PC-3 (cell line): ENCODE measurements at regions of chr1 and their contacts with region 1.

Region 1: GRCh38 chr1:204565617-204566582 is 49.7 kb downstream of the MDM4 start:
- DNase-seq: peak; percentile 96
- ATAC-seq: peak; percentile 78
- H3K4me3 ChIP-seq: peak overlapping the region; percentile 6; the same call in 1 of the 2 replicates
- H3K27ac ChIP-seq: peak overlapping the region; percentile 54
- H3K4me1 ChIP-seq: peaks cover 35% of the 10 kb centered on the region
- H3K27me3 ChIP-seq: no peaks in the 10 kb centered on the region
- CTCF ChIP-seq: peak; percentile 99

Region 2: DNA sequence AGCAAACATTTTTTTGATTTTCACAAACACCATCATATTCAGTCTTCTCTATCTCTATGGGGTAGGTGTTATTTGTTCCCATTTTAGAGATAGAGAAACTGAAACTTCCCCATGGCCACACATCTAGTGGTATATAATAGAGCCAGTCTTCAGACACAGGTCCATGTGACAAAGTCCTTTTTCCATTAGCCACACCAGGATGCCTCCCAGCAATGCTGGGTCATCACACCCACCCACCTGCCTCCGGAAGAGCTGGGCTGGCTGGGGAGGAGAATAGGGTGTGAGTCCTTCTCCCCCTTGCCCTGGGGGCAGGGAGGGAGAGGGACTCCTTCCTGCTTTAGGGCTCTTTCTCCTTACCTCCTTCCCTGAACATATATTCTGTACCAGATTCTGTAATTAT is 463.2 kb before region 1 on chr1:
- CTCF ChIA-PET with region 1: no interaction called
- POLR2A ChIA-PET with region 1: no interaction called
- intact Hi-C with region 1: no loop called
- DNase-seq: peak; percentile 98
- ATAC-seq: peak; percentile 52
- H3K4me3 ChIP-seq: peak overlapping the region; percentile 38; the same call in 1 of the 2 replicates
- H3K27ac ChIP-seq: peak overlapping the region; percentile 97
- H3K4me1 ChIP-seq: peaks cover 58% of the 10 kb centered on the region
- H3K27me3 ChIP-seq: no peaks in the 10 kb centered on the region
- CTCF ChIP-seq: no peak

Region 3: DNA sequence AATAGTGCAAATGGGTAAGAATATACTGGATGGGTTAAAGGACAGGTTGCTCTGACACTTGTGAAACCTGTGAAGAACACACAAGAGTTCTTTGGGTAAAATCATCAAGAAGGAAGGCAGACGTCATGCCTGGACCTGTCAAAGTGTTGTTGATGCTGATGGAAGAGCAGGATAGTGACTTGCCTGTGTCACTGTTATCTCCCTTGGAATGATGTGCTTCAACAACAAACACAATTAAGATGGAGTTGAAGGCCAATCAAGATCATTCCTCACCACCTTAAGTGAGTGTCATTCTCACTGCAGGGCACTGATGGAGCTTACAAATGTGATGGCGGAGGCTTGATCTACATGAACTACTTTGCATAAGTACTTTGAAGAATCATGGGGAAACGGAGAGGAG is 46.4 kb after region 1 on chr1:
- CTCF ChIA-PET with region 1: no interaction called
- POLR2A ChIA-PET with region 1: no interaction called
- intact Hi-C with region 1: no loop called
- DNase-seq: no peak
- ATAC-seq: no peak
- H3K4me3 ChIP-seq: no peak overlapping the region
- H3K27ac ChIP-seq: no peak overlapping the region
- H3K4me1 ChIP-seq: no peaks in the 10 kb centered on the region
- H3K27me3 ChIP-seq: no peaks in the 10 kb centered on the region
- CTCF ChIP-seq: no peak

Region 4: DNA sequence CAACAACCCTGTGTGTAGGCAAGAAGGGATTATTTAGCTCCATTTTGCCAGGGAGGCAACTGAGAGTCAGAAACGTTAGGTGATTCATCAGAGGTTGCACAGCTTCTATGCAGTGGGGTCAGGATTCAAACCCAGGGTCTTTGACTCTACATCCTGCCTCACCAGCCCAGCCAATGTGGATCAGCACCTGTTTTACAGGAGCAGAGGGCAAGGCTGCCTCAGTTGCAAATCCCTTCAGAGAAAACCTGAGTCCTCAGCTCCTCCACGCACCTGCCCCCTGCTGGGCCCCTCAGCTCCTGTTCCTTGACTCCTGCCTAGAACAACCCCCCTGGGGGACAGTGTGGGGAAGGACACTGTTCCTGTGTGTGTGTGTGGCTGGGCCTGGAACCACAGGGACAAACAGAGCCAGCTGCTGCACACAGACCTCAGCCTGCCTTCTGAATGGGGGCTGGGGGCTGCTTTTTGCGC is 58.0 kb after region 1 on chr1:
- CTCF ChIA-PET with region 1: interaction called, 10 read pairs
- POLR2A ChIA-PET with region 1: no interaction called
- intact Hi-C with region 1: loop called (anchors 2 kb)
- DNase-seq: peak; percentile 51
- ATAC-seq: peak; percentile 38; the same call in 1 of the 2 replicates
- H3K4me3 ChIP-seq: no peak overlapping the region
- H3K27ac ChIP-seq: peak overlapping the region; percentile 41
- H3K4me1 ChIP-seq: peaks cover 44% of the 10 kb centered on the region
- H3K27me3 ChIP-seq: no peaks in the 10 kb centered on the region
- CTCF ChIP-seq: peak; percentile 66

Region 5: DNA sequence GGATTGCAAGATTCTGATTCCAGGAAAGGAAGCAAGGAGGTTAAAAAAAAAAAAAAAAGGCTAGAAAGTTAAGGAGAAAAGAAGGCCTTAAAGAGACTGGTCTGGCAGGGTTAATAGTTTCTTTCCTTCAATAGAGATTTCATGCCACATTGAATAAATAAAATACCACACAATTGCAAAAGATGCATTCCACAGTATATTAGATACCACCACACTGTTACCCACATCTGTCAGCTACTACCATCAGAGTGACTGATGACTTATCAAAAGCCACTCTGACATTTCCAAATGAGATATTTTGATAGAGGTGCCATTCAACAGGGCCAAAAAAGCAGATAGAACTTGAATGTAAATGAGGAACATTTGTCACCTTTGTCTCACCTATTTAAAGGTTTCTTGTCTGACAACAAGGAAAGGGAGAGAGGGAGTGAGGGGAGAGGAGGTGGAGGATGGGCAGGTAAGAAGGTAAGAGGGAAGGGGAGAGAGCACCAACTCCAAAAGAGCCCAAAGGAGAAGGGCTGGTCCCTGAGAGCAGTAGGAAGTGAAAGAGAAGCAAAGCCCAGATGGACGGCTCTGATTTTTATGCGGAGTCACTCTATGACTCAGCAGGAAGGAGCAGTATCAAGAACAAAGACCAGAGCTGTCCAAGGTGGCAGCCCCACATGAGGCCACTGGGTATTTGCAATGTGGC is 81.4 kb after region 1 on chr1:
- CTCF ChIA-PET with region 1: no interaction called
- POLR2A ChIA-PET with region 1: no interaction called
- intact Hi-C with region 1: loop called (anchors 2 kb)
- DNase-seq: peak; percentile 94
- ATAC-seq: peak; percentile 96
- H3K4me3 ChIP-seq: peak overlapping the region; percentile 15; the same call in 1 of the 2 replicates
- H3K27ac ChIP-seq: peak overlapping the region; percentile 63
- H3K4me1 ChIP-seq: peaks cover 10% of the 10 kb centered on the region
- H3K27me3 ChIP-seq: no peaks in the 10 kb centered on the region
- CTCF ChIP-seq: no peak

Region 6: GRCh38 chr1:204763706-204764427 is 198.0 kb after region 1 on chr1:
- CTCF ChIA-PET with region 1: interaction called, 17 read pairs
- POLR2A ChIA-PET with region 1: no interaction called
- intact Hi-C with region 1: loop called (anchors 1 kb)
- DNase-seq: peak; percentile 98
- ATAC-seq: peak; percentile 93
- H3K4me3 ChIP-seq: no peak overlapping the region
- H3K27ac ChIP-seq: no peak overlapping the region
- H3K4me1 ChIP-seq: peaks cover 12% of the 10 kb centered on the region
- H3K27me3 ChIP-seq: peaks cover 15% of the 10 kb centered on the region
- CTCF ChIP-seq: peak; percentile 100

Region 7: GRCh38 chr1:205344066-205344928 is 778.4 kb after region 1 on chr1:
- CTCF ChIA-PET with region 1: no interaction called
- POLR2A ChIA-PET with region 1: no interaction called
- intact Hi-C with region 1: no loop called
- DNase-seq: no peak
- ATAC-seq: peak; percentile 52
- H3K4me3 ChIP-seq: peak overlapping the region; percentile 59
- H3K27ac ChIP-seq: no peak overlapping the region
- H3K4me1 ChIP-seq: peaks cover 6% of the 10 kb centered on the region; the same call in 1 of the 2 replicates
- H3K27me3 ChIP-seq: peaks cover 10% of the 10 kb centered on the region
- CTCF ChIP-seq: no peak